Breast epithelium (tissue), 4 donors: ENCODE measurements at regions of chr7 and their contacts with region 1.

Region 1: DNA sequence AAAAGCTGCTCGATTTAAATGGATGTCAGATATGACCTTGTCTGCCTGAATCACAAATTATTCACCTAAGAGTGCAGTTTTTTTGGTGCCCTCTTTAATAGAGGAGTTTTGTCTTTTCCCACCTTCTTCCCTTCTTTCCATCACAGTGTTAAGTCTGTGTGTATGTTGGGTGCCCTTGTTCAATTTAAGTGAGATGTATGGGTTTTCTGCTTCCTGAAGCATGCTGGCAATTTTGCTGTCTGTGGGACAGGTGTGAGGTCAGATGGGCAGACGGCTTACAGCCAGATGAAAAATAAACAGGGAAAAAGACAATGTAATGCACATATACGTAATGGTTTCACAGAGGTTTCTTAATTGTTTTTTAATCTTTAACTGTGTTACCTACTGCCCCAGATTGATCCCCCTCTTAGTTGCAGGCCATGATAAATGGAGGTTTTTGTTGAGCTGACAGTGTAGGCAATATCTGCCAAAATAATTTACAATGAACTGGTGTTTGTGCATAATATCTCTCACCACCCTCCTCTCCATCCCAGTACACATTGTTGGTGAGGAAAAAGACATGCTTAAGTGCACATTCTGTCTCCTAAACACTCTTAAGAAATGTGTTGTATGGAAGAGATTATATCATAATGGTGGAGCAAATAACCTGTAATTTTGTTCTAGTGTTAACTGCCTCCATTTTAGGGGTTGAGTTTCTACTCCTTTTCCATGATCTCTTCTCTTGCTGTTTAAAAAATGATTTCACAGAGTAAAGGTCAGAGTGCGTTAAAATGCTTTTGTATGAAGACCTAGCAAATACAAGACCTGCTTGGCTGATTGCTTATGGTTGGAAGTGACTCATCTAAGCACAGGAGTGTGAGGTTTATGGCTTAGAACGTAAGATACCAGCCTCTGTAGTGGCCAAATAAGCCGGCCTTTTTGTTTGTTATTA is 123.9 kb downstream of the LRRC4 start:
- DNase-seq: no peak
- H3K4me3 ChIP-seq: no peak overlapping the region
- H3K27ac ChIP-seq: peak overlapping the region; percentile 49 to 70
- H3K4me1 ChIP-seq: no peaks in the 10 kb centered on the region
- H3K27me3 ChIP-seq: no peaks in the 10 kb centered on the region
- CTCF ChIP-seq: no peak
- POLR2A ChIP-seq: no peak

Region 2: DNA sequence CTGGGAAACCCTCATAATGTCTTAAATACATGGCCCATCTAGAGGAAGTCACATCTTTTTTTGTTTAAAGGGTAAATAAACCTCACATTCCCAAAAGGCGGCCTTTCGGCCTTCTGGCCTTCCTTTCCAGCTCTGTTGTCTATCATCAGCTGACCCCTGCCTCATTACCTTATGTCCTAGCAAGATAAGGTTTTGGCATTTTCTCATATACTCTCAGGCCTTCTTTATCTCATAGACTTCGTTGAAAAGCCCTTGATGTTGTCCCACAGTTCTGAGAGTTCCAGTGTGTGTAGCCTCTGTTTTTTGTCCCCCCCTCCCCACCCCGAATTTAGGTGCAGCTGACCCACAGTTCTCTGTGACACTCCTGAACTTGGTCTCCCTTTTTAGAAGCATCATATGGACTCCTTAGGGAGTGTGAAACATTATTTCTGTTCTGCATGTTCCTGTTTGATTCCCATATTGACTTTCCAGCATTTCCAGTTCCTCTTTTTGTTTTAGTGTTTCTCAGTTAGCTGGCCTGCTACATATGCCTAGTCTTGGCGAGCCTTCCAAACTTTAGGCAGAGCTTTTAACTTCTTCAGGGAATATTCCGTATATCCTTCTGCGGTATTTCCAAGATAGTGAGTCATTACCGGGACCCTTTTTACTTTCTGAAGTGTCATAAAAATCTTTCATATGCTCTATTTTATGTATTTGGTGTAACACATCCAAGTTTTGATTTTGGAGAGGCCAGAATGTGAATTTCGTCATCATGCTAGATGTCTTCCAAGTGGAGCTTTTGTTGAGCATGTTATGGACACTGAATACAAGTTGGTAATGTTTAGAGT is 14.7 kb before region 1 on chr7:
- intact Hi-C with region 1: no loop called
- DNase-seq: no peak
- H3K4me3 ChIP-seq: no peak overlapping the region
- H3K27ac ChIP-seq: no peak overlapping the region
- H3K4me1 ChIP-seq: no peaks in the 10 kb centered on the region
- H3K27me3 ChIP-seq: no peaks in the 10 kb centered on the region
- CTCF ChIP-seq: no peak
- POLR2A ChIP-seq: no peak

Region 3: GRCh38 chr7:127959770-127960169 is 52.4 kb after region 1 on chr7:
- intact Hi-C with region 1: loop called (anchors 2 kb)
- DNase-seq: no peak
- H3K4me3 ChIP-seq: no peak overlapping the region
- H3K27ac ChIP-seq: no peak overlapping the region
- H3K4me1 ChIP-seq: no peaks in the 10 kb centered on the region
- H3K27me3 ChIP-seq: no peaks in the 10 kb centered on the region
- CTCF ChIP-seq: no peak
- POLR2A ChIP-seq: no peak